HAP-1 (cell line): ENCODE measurements at regions of chr22 and their contacts with region 1.

Region 1: GRCh38 chr22:23398651-23399366 is 181.3 kb downstream of the IGLL1 start:
- DNase-seq: no peak
- H3K4me3 ChIP-seq: no peak overlapping the region
- H3K4me1 ChIP-seq: peaks cover 7% of the 10 kb centered on the region; the same call in 1 of the 2 replicates
- H3K27me3 ChIP-seq: no peaks in the 10 kb centered on the region

Region 2: DNA sequence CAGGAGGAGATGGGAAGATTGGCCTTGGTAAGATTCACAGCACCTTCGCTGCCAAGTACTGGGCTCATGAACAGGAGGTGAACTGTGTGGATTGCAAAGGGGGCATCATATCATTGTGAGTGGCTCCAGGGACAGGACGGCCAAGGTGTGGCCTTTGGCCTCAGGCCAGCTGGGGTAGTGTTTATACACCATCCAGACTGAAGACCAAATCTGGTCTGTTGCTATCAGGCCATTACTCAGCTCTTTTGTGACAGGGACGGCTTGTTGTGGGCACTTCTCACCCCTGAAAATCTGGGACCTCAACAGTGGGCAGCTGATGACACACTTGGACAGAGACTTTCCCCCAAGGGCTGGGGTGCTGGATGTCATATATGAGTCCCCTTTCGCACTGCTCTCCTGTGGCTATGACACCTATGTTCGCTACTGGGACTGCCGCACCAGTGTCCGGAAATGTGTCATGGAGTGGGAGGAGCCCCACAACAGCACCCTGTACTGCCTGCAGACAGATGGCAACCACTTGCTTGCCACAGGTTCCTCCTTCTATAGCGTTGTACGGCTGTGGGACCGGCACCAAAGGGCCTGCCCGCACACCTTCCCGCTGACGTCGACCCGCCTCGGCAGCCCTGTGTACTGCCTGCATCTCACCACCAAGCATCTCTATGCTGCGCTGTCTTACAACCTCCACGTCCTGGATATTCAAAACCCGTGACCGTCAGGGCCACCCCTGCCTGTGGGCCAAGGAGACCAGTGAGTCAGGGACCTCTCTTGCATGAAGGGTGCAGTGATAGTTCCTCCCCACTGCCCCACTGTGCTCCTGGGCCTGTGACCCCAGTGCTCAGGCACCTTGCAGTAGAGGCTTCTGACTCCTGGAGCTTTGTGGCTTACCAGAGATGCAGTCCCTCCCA is 134.9 kb before region 1 on chr22:
- in situ Hi-C with region 1: no loop called
- DNase-seq: no peak
- H3K4me3 ChIP-seq: no peak overlapping the region
- H3K4me1 ChIP-seq: no peaks in the 10 kb centered on the region
- H3K27me3 ChIP-seq: no peaks in the 10 kb centered on the region

Region 3: DNA sequence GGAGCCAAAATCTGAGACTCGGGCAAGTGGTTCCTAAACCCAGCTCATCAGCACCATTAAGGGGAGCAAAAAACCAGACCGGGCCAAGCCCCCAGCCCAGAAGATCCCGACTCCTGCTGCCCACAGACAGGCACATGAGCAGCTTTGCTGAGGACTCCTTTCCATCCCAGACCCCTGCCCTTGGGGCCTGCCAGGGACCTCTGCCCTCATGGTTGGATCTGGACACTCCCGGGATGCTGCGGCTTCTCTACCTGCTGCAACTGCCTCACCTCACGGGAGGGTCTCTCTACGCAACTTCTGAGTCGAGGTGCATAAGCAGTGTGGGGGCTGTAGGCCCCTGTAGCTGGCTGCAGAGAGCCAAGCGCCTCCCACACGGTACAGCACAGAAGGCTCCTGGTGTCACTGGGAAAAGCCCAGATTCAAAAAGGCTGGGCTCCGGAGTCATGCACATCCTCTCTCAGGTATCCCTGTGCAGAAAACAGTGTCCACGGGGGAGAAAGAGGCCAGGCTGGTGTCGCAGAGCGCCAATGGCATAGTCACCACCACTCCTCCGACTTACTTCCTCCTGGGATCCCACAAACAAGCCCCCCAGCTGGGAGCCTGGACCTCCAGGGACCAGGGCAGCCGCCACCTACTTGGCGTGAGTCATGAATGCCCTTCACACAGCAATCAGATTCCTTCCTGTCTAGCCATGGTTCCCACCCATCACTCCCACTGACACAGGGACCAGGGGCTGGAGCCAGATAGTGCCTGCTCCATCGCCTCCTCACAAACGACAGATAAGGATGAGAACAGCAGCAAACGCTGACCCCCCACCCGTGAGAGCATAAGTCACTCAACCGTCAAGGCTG is 96.4 kb before region 1 on chr22:
- in situ Hi-C with region 1: loop called (anchors 5 kb)
- DNase-seq: peak in 1 of 2 experiments; percentile 6
- H3K4me3 ChIP-seq: no peak overlapping the region
- H3K4me1 ChIP-seq: no peaks in the 10 kb centered on the region
- H3K27me3 ChIP-seq: no peaks in the 10 kb centered on the region